Right cardiac atrium (tissue), 5 donors: ENCODE measurements at regions of chr10 and their contacts with region 1.

Region 1: GRCh38 chr10:24724381-24725228 is 918 bp upstream of the ARHGAP21 start:
- DNase-seq: peak; percentile 98 to 100 (median 99)
- ATAC-seq: peak; percentile 95
- H3K4me3 ChIP-seq: peak overlapping the region; percentile 100
- H3K27ac ChIP-seq: peak overlapping the region; percentile 89
- H3K4me1 ChIP-seq: no peaks in the 10 kb centered on the region
- H3K27me3 ChIP-seq: no peaks in the 10 kb centered on the region

Region 2: DNA sequence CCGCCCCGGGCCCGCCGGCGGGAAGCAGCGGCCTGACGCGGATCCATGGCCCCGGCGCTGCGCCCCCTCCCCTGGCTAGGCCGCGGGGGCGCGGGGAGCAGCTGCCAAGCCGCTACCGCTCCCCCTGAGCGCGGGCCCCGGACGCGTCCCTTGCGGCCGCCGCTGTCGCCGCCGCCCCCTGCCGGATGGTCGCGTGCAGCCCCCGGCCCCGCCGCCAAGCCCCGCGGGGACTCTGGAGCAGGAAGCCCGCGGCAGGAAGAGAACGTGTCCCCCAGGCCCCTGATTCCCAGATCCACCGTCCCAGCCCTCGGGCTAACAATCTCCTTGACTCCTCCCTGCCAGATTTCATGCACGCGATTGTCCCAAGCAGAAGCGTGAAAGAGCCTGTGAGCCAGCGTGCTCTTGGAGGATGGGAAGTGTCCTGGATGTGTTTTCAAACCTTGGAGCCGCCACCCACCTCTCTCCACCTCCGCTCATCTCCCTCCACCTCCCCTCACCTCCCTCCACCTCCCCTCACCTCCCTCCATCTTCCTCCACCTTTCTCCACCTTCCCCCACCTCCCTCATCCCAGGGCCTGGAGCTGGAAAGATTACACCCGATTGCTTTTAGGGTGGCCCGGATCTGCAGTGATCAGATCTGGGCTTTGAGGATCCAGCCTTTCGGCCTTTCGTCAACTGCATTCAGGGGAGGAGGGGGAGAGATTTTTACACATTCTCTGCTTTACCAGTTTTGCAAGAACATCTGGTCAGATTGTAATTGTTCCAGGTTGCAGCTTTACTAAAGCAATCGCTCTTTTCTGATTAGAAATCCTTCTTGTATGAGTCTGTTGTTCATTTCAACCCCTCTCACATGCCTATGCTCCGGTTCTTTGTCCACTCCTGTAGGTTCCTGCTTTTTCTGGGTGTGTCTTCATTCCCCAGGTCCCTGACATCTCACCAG is 228.4 kb after region 1 on chr10:
- intact Hi-C with region 1: loop called in 3 of 4 experiments (anchors 10 kb)
- DNase-seq: peak; percentile 51 to 81 (median 81)
- ATAC-seq: peak; percentile 55 to 56
- H3K4me3 ChIP-seq: peak overlapping the region; percentile 82
- H3K27ac ChIP-seq: peak overlapping the region; percentile 49
- H3K4me1 ChIP-seq: peaks cover 7% of the 10 kb centered on the region
- H3K27me3 ChIP-seq: no peaks in the 10 kb centered on the region